ENCODE measurements at regions of chr11 and their contacts with region 1.

Region 1: GRCh38 chr11:102287964-102288724 is 29.1 kb upstream of the BIRC3 start:
- DNase-seq: peak in 7 of 9 donors; percentile 51 to 73 (median 66)
- ATAC-seq: peak; percentile 86
- H3K4me3 ChIP-seq: no peak overlapping the region
- H3K4me3 Mint-ChIP-seq: peak overlapping the region in 9 of 10 donors; percentile 12 to 73 (median 60)
- H3K27ac ChIP-seq: no peak overlapping the region
- H3K27ac Mint-ChIP-seq: peak overlapping the region in 6 of 9 donors; percentile 15 to 56 (median 38)
- H3K4me1 ChIP-seq: peaks cover 3 to 5% of the 10 kb centered on the region in 2 donors
- H3K4me1 Mint-ChIP-seq: peaks cover 9 to 33% (median 27%) of the 10 kb centered on the region in 7 donors
- H3K27me3 ChIP-seq: no peaks in the 10 kb centered on the region
- H3K27me3 Mint-ChIP-seq: no peaks in the 10 kb centered on the region

Region 2: DNA sequence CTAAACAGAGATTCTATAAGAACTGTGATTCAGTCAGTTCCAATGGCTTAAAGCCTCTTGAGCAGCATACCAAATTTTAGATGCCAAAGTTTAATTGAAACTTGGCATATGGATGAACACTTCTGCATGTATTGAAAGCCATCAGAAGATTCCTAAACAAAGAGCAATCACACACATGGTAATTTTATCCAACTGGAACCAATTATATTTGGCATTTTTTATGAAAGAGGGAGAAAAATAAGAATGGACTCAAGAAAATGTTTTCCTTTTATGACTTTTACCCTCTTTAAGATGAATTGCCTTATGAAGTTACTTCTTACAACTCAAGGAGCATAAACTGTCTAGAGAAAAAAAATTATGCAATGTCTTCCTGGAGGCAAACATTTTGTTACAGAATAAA is 711.7 kb before region 1 on chr11:
- CTCF ChIA-PET with region 1: no interaction called
- POLR2A ChIA-PET with region 1: no interaction called
- intact Hi-C with region 1: no loop called
- DNase-seq: no peak
- ATAC-seq: no peak
- H3K4me3 ChIP-seq: no peak overlapping the region
- H3K4me3 Mint-ChIP-seq: no peak overlapping the region
- H3K27ac ChIP-seq: no peak overlapping the region
- H3K27ac Mint-ChIP-seq: no peak overlapping the region
- H3K4me1 ChIP-seq: no peaks in the 10 kb centered on the region
- H3K4me1 Mint-ChIP-seq: no peaks in the 10 kb centered on the region
- H3K27me3 ChIP-seq: no peaks in the 10 kb centered on the region
- H3K27me3 Mint-ChIP-seq: peaks cover 0 to 8% (median 4%) of the 10 kb centered on the region in 5 donors

Region 3: GRCh38 chr11:102254045-102254444 is 34.1 kb before region 1 on chr11:
- CTCF ChIA-PET with region 1: no interaction called
- POLR2A ChIA-PET with region 1: no interaction called
- intact Hi-C with region 1: no loop called
- DNase-seq: no peak
- ATAC-seq: no peak
- H3K4me3 ChIP-seq: no peak overlapping the region
- H3K4me3 Mint-ChIP-seq: no peak overlapping the region
- H3K27ac ChIP-seq: no peak overlapping the region
- H3K27ac Mint-ChIP-seq: no peak overlapping the region
- H3K4me1 ChIP-seq: no peaks in the 10 kb centered on the region
- H3K4me1 Mint-ChIP-seq: no peaks in the 10 kb centered on the region
- H3K27me3 ChIP-seq: no peaks in the 10 kb centered on the region
- H3K27me3 Mint-ChIP-seq: no peaks in the 10 kb centered on the region

Region 4: DNA sequence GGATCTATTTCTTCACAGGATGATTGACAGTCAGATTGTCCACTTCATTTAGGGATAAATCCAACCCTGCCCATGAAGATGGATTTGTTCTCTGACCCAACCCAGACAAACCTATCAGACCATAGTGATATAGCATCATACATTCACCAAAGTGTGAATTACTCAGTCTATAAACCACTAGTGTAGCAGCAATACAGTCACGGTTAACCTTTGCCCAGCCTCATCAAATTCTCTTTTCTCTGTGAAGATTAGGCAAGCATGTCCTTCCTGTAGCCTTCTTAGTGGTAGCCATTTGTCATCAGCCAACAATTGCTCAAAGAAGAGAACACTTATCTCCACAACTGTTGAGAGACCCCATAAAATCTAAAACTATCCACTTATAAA is 44.5 kb after region 1 on chr11:
- CTCF ChIA-PET with region 1: interaction called, 13 read pairs
- POLR2A ChIA-PET with region 1: no interaction called
- intact Hi-C with region 1: no loop called
- DNase-seq: no peak
- ATAC-seq: no peak
- H3K4me3 ChIP-seq: no peak overlapping the region
- H3K4me3 Mint-ChIP-seq: no peak overlapping the region
- H3K27ac ChIP-seq: peak overlapping the region; percentile 42
- H3K27ac Mint-ChIP-seq: peak overlapping the region in 8 of 9 donors; percentile 6 to 75 (median 41)
- H3K4me1 ChIP-seq: no peaks in the 10 kb centered on the region
- H3K4me1 Mint-ChIP-seq: peaks cover 0 to 28% (median 20%) of the 10 kb centered on the region in 7 donors
- H3K27me3 ChIP-seq: no peaks in the 10 kb centered on the region
- H3K27me3 Mint-ChIP-seq: no peaks in the 10 kb centered on the region

Region 5: DNA sequence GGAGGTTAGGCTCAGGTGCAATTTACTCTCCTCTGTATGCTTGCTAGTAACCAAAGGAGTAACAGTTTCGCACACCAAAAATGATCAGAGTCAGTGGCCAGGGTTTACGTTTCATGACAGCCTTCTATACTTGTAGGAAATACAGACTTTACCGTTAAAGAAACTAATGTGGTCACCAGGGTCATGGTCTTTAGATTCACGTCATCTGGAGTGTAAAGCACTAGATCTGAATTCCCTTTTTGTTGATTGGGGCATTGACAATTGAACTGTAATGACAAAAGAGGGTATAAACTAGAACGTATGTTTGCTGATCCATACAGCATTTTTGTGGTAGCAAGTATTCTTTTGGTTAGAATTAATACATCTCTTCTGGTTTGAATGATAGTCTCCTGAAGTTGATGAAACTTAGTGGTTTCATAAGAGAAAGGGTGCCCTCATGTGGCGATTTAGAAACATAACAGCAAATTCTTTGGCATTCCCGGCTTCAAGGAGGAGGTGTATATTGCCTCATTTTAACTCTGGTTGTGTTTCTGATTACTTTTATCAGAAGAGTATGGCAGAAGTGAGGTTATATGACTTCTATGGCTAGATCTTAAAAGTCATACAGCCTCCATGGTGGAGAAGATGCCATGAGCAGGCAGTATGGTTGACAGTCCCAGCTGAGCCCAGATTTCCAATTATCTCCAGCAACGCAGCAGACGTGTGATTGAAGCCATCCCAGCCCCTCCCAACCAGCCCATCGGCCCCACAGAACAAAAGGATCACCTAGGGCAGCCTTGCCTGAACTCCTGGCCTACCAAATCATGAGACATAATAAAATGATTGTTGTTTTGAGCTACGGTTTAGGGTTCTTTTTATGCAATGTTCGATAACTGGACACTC is 207.3 kb after region 1 on chr11:
- CTCF ChIA-PET with region 1: interaction called, 8 read pairs
- POLR2A ChIA-PET with region 1: no interaction called
- intact Hi-C with region 1: loop called (anchors 1 kb)
- DNase-seq: peak in 7 of 9 donors; percentile 54 to 79 (median 71)
- ATAC-seq: peak; percentile 91
- H3K4me3 ChIP-seq: no peak overlapping the region
- H3K4me3 Mint-ChIP-seq: peak overlapping the region in 1 of 10 donors; percentile 18
- H3K27ac ChIP-seq: no peak overlapping the region
- H3K27ac Mint-ChIP-seq: peak overlapping the region in 4 of 9 donors; percentile 2 to 40 (median 12)
- H3K4me1 ChIP-seq: no peaks in the 10 kb centered on the region
- H3K4me1 Mint-ChIP-seq: peaks cover 4 to 26% (median 10%) of the 10 kb centered on the region in 7 donors
- H3K27me3 ChIP-seq: no peaks in the 10 kb centered on the region
- H3K27me3 Mint-ChIP-seq: peaks cover 0 to 22% (median 0%) of the 10 kb centered on the region in 5 donors

Region 6: DNA sequence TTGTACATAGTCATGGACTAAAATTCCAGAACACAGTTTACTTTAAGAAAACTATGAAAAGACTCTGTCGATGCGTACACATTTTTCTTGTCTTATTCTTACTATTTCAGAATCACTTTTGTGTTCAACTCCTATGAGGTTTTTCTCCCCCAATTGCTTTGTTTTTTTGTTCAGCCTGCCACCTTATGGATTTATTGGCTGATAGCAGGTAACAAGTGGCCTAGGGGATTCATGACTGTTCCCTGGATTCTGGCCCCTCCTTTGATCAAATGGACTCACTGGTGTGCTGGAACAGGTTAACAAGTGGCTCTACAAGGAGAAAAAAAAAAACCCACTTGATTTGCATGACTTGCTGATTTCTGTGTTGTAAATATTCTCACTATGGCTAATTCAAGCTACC is 326.3 kb after region 1 on chr11:
- CTCF ChIA-PET with region 1: interaction called, 9 read pairs
- POLR2A ChIA-PET with region 1: no interaction called
- intact Hi-C with region 1: loop called (anchors 1 kb)
- DNase-seq: peak in 1 of 9 donors; percentile 2
- ATAC-seq: no peak
- H3K4me3 ChIP-seq: no peak overlapping the region
- H3K4me3 Mint-ChIP-seq: no peak overlapping the region
- H3K27ac ChIP-seq: no peak overlapping the region
- H3K27ac Mint-ChIP-seq: no peak overlapping the region
- H3K4me1 ChIP-seq: no peaks in the 10 kb centered on the region
- H3K4me1 Mint-ChIP-seq: peaks cover 0 to 12% (median 0%) of the 10 kb centered on the region in 7 donors
- H3K27me3 ChIP-seq: no peaks in the 10 kb centered on the region
- H3K27me3 Mint-ChIP-seq: peaks cover 0 to 6% (median 0%) of the 10 kb centered on the region in 5 donors

Measured in naive thymus-derived CD4-positive, alpha-beta T cell (primary cell).